ENCODE measurements at regions of chr2 and their contacts with region 1.

Region 1: GRCh38 chr2:224417350-224418346 is 15.7 kb upstream of the FAM124B start:
- DNase-seq: peak; percentile 94
- H3K4me3 ChIP-seq: no peak overlapping the region
- H3K27ac ChIP-seq: peak overlapping the region; percentile 89
- H3K4me1 ChIP-seq: peaks cover 19% of the 10 kb centered on the region
- H3K27me3 ChIP-seq: no peaks in the 10 kb centered on the region
- CTCF ChIP-seq: no peak
- POLR2A ChIP-seq: no peak

Region 2: DNA sequence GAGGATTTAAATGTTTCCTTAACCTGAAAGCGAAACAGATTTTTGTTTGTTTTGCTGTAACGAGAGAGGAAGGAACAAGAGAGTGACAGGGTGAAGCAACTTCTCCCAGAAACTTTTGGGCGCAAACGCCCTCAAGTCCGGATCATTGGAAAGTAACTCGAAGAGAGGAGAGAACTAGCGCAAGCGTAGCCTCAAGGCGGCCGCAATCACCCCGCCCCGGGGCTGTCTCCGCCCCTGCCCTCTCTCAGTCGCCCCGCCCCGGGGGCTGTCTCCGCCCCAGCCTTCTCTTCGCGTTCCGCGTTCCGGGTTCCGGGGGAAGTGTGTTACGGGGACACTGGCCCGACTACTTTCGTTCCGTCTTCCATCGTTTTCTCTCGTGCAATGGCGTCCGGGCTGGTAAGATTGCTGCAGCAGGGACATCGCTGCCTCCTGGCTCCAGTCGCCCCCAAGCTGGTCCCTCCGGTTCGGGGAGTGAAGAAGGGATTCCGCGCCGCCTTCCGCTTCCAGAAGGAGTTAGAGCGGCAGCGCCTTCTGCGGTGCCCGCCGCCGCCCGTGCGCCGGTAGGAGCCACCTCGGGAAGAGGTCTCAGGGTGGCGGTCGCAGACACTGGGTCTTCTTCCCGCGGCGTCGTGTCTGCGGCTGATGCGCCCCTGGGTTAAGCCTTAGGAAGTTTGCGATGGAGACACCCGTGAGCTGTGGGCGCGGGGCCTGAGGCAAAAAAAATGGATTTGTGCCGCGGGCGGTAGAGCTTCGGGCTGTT is 460.4 kb before region 1 on chr2 and contains the start of gene MRPL44:
- CTCF ChIA-PET with region 1: no interaction called
- POLR2A ChIA-PET with region 1: no interaction called
- dilution Hi-C with region 1: no loop called
- intact Hi-C with region 1: no loop called
- DNase-seq: peak; percentile 95
- H3K4me3 ChIP-seq: peak within 1 kb of the TSS; percentile 89 to 99 (median 95)
- H3K27ac ChIP-seq: peak within 1 kb of the TSS; percentile 58
- H3K4me1 ChIP-seq: peaks cover 38% of the 10 kb centered on the region
- H3K27me3 ChIP-seq: no peaks in the 10 kb centered on the region
- CTCF ChIP-seq: no peak
- POLR2A ChIP-seq: peak; percentile 90
- total RNA-seq, gene MRPL44: 27.7 and 31.5 TPM in 2 replicates

Region 3: DNA sequence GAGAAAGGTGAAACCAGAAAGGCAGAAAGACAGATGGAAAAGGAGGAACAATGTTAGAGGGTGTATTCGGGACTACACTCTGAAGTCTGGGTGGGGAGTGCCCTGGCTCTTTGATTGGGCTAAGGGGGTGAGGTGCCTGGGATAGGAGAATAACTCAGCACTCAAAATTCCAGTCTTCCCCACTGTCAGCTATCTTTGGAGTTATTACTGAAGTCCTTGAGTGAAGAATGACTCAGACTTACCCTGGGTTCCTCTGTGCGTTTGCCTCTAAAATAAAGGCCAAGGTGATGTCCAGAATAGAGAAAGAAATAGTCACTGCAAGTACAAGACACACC is 226.7 kb before region 1 on chr2:
- CTCF ChIA-PET with region 1: no interaction called
- POLR2A ChIA-PET with region 1: no interaction called
- dilution Hi-C with region 1: no loop called
- intact Hi-C with region 1: no loop called
- DNase-seq: no peak
- H3K4me3 ChIP-seq: no peak overlapping the region
- H3K27ac ChIP-seq: no peak overlapping the region
- H3K4me1 ChIP-seq: no peaks in the 10 kb centered on the region
- H3K27me3 ChIP-seq: peaks cover 6 to 10% of the 10 kb centered on the region in 2 experiments
- CTCF ChIP-seq: no peak
- POLR2A ChIP-seq: no peak

Region 4: GRCh38 chr2:224442071-224442967 is 24.7 kb after region 1 on chr2:
- CTCF ChIA-PET with region 1: interaction called, 9 read pairs
- POLR2A ChIA-PET with region 1: interaction called, 4 read pairs
- dilution Hi-C with region 1: no loop called
- intact Hi-C with region 1: loop called (anchors 1 kb)
- DNase-seq: peak; percentile 61
- H3K4me3 ChIP-seq: peak overlapping the region; percentile 44 to 86 (median 69)
- H3K27ac ChIP-seq: peak overlapping the region; percentile 62
- H3K4me1 ChIP-seq: peaks cover 17% of the 10 kb centered on the region
- H3K27me3 ChIP-seq: no peaks in the 10 kb centered on the region
- CTCF ChIP-seq: no peak
- POLR2A ChIP-seq: peak; percentile 24

Region 5: DNA sequence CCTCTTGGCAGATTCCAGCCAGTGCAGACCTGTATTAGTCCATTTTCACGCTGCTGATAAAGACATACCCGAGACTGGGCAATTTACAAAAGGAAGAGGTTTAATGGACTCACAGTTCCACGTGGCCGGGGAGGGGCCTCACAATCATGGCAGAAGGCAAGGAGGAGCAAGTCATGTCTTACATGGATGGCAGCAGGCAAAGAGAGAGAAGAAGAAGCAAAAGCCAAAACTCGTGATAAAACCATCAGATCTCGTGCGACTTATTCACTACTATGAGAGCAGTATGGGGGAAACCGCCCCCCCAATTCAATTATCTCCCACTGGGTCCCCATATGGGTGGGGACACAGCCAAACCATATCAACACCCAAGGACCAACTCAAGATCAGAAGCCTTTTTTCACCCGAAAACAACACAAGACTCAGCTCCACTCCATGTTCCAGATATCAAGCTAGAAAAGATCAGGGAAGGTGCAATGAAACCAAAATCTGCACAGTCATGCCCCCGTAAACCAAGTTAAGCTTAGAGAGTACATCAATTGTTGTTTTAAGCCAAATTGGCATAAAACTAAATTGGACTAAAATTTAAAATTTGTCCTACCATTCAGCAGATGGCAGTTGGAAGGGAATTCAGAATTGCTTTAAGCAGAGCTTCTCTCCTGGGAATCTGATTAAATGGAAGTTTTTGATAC is 39.9 kb after region 1 on chr2:
- CTCF ChIA-PET with region 1: no interaction called
- POLR2A ChIA-PET with region 1: no interaction called
- dilution Hi-C with region 1: no loop called
- intact Hi-C with region 1: no loop called
- DNase-seq: no peak
- H3K4me3 ChIP-seq: no peak overlapping the region
- H3K27ac ChIP-seq: no peak overlapping the region
- H3K4me1 ChIP-seq: no peaks in the 10 kb centered on the region
- H3K27me3 ChIP-seq: no peaks in the 10 kb centered on the region
- CTCF ChIP-seq: no peak
- POLR2A ChIP-seq: no peak

Region 6: DNA sequence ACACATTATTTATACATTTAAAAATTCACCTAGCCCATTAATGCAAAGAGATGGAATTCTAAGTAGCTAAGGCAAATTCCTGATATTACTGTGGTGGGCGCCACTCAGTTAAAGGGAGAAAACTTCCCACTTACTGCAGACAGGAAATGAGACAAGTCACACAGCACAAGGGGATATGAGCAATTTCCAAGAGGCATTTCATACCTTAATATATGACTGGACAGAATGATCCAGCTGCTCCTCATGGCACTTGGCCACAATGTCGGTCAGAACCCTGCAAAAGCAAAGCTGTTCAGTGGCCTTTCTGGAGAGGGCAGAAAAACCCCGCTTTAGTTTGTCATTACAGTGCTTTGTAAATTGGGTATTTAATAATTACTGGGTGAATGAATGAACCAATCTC is 419.9 kb after region 1 on chr2:
- CTCF ChIA-PET with region 1: no interaction called
- POLR2A ChIA-PET with region 1: no interaction called
- dilution Hi-C with region 1: no loop called
- intact Hi-C with region 1: no loop called
- DNase-seq: peak; percentile 95
- H3K4me3 ChIP-seq: peak overlapping the region in 1 of 3 experiments; percentile 49
- H3K27ac ChIP-seq: peak overlapping the region; percentile 100
- H3K4me1 ChIP-seq: peaks cover 29% of the 10 kb centered on the region
- H3K27me3 ChIP-seq: no peaks in the 10 kb centered on the region
- CTCF ChIP-seq: peak; percentile 1 to 10
- POLR2A ChIP-seq: peak; percentile 65

Measured in endothelial cell of umbilical vein (primary cell).